ENCODE measurements at regions of chr6 and their contacts with region 1.

Region 1: GRCh38 chr6:73675466-73676098 is 20.4 kb upstream of the CD109 start:
- DNase-seq: peak; percentile 49 to 76
- ATAC-seq: peak; percentile 88

Region 2: GRCh38 chr6:73732845-73733675 is 57.5 kb after region 1 on chr6:
- intact Hi-C with region 1: loop called (anchors 2 to 10 kb)
- DNase-seq: peak in 1 of 2 donors; percentile 29
- ATAC-seq: peak; percentile 79

Region 3: DNA sequence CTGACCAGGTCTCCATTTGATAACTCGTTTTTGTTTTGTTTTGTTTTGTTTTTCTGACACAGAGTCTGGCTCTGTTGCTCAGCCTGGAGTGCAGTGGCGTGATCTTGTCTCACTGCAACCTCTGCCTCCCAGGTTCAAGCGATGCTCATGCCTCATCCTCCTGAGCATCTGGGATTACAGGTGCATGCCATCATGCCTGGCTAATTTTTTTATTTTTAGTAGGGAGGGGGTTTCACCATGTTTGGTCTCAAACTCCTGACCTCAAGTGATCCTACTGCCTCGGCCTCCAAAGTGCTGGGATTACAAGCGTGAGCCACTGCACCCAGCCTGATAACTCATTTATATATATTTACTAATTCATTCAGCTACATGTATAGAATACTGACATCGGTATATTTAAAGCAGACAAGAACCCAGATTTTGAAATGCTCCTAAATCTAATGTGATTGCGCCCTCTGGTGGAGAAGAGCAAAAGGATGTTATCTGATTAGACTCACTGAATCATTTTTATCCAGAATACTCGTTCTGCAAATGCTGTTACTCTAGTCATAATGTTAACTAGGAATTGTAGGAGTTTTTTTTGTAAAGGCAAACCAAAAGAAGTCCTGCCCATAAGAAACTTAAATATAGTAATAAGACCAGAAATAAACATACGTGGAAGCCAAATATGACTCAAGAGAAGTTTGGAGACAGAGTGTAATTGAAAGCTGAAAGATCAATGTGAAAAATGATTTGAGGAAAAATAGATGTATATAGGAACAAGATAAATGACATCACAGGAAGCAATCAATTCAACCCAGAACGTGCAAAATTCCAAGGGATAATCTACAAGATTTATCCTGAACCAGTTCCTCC is 1535.5 kb after region 1 on chr6:
- intact Hi-C with region 1: loop called in 1 of 2 experiments (anchors 5 kb)
- DNase-seq: peak in 1 of 2 donors; percentile 54
- ATAC-seq: peak; percentile 41

Measured in left colon (tissue), 2 donors.